Activated CD4-positive, alpha-beta T cell treated with anti-CD3 and anti-CD28 coated beads for 36 hours (primary cell): ENCODE measurements at regions of chr1 and their contacts with region 1.

Region 1: GRCh38 chr1:19582302-19582701 is 61.8 kb upstream of the NBL1 start:
- DNase-seq: peak; percentile 89
- ATAC-seq: peak; percentile 96
- H3K4me3 Mint-ChIP-seq: no peak overlapping the region
- H3K27ac Mint-ChIP-seq: no peak overlapping the region
- H3K4me1 Mint-ChIP-seq: peaks cover 8% of the 10 kb centered on the region
- H3K27me3 Mint-ChIP-seq: peaks cover 2% of the 10 kb centered on the region

Region 2: GRCh38 chr1:19341201-19342072 is 240.9 kb before region 1 on chr1:
- CTCF ChIA-PET with region 1: interaction called, 7 read pairs
- POLR2A ChIA-PET with region 1: no interaction called
- intact Hi-C with region 1: loop called (anchors 1 to 5 kb)
- DNase-seq: peak; percentile 89
- ATAC-seq: peak; percentile 76
- H3K4me3 Mint-ChIP-seq: no peak overlapping the region
- H3K27ac Mint-ChIP-seq: no peak overlapping the region
- H3K4me1 Mint-ChIP-seq: peaks cover 23% of the 10 kb centered on the region
- H3K27me3 Mint-ChIP-seq: no peaks in the 10 kb centered on the region

Region 3: DNA sequence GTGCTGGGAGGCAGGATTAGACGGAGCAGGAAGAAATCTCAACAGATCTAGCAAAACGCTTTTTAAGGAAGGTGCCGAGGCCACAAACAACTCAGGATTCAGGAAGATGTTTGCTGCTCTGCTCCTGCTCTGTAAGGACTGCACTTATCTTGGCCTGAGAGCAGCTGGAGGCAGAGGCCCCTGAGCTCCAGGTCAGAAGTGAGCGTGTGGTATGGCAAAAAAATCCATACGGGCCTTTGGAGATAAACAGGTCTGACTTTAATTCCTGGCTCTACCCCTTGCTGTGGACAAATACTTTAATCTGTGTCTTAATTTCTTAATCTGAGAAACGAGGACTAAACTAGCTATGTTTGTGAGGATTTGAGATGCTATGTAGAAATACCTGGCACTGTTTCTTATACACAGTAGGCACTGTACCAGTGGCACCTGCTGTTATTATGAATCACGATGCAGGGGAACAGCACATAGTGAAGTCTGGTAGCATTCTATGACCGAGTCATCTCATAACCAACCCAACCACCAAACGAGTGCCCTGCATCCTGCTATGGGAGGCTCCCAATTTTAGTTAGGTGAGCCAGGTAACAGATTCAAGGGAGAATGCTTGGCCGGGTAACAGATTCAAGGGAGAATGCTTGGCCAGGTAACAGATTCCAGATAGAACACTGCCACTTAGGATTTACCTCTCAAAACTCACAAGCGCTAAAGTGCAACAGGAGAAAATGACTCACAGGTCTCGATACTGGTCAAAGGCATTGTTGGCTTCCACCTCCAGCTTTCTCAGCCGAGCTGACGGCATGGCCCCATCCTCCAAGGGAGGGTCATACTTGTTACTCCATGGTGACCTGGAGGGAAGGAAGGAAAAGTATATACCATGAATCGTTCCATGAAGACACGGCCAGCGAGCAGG is 204.2 kb before region 1 on chr1:
- CTCF ChIA-PET with region 1: interaction called, 11 read pairs
- POLR2A ChIA-PET with region 1: no interaction called
- intact Hi-C with region 1: no loop called
- DNase-seq: peak; percentile 57
- ATAC-seq: peak; percentile 93
- H3K4me3 Mint-ChIP-seq: no peak overlapping the region
- H3K27ac Mint-ChIP-seq: peak overlapping the region; percentile 45
- H3K4me1 Mint-ChIP-seq: peaks cover 23% of the 10 kb centered on the region
- H3K27me3 Mint-ChIP-seq: no peaks in the 10 kb centered on the region